CD4-positive, alpha-beta memory T cell (primary cell): ENCODE measurements at regions of chr22 and their contacts with region 1.

Region 1: GRCh38 chr22:31661851-31662656 is at the start of gene PISD:
- DNase-seq: peak; percentile 96 to 97 (median 97)
- H3K4me3 ChIP-seq: peak within 1 kb of the TSS; percentile 78 to 96
- H3K4me3 Mint-ChIP-seq: peak within 1 kb of the TSS; percentile 97 to 100 (median 100)
- H3K27ac ChIP-seq: peak within 1 kb of the TSS; percentile 73
- H3K27ac Mint-ChIP-seq: peak within 1 kb of the TSS; percentile 95 to 100 (median 98)
- H3K4me1 ChIP-seq: peaks cover 21% of the 10 kb centered on the region
- H3K4me1 Mint-ChIP-seq: peaks cover 26 to 46% (median 33%) of the 10 kb centered on the region in 4 donors
- H3K27me3 ChIP-seq: no peaks in the 10 kb centered on the region
- H3K27me3 Mint-ChIP-seq: peaks cover 0 to 2% of the 10 kb centered on the region in 2 donors
- total RNA-seq, gene PISD: 34.3 to 35.4 TPM

Region 2: DNA sequence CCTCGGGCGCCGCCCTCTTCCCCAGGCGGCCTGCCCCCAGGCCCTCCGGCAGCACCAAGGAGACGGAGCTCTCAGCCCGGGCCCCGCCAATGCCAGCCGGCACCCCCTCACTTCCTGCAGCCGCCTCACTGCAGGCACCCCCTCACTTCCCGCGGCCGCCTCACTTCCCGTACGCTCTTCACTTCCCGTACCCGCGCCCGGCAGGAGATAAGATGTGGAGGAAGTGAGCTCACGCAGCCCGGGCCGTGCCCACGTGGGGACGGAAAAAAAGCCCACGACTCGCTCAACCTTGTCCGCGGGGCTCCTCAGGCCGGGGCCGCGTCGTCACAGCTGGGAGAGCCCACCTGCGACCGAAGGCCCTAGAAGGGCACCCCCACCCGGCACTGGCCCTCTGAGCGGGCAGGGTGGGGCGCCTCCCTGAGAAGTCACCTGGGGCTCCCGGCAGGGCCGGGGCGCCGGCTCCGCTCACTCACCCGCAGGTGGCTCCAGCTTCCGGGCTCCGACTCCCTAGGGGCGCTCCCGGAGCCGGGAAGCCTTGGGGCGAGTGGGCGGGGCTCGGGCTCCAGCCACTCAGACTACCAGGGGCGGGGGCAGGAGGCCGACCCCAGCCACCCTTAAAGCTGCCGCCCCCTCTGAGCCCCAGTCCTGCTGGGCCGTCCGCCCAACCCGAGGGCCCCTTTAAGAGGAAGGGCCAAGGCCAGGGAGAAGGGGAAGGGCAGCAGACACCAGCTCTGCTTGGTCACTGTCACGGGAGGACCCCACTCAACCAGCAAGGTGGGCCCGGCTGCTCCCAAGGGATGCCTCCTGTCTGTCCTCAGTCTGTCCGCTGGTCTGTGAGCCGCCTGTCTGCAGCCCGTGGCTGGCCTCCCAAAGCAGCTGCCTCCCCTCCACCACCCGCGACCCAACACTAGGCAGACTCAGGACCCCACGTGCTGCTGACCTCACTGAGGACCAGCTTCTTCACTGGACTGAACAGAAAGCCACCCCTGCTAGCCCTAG is 31.4 kb before region 1 on chr22:
- CTCF ChIA-PET with region 1: interaction called, 5 read pairs
- POLR2A ChIA-PET with region 1: interaction called, 23 read pairs
- intact Hi-C with region 1: no loop called
- DNase-seq: peak; percentile 88 to 94 (median 89)
- H3K4me3 ChIP-seq: peak overlapping the region; percentile 29 to 69
- H3K4me3 Mint-ChIP-seq: peak overlapping the region; percentile 86 to 89 (median 88)
- H3K27ac ChIP-seq: peak overlapping the region; percentile 86
- H3K27ac Mint-ChIP-seq: peak overlapping the region; percentile 88 to 96 (median 94)
- H3K4me1 ChIP-seq: peaks cover 56% of the 10 kb centered on the region
- H3K4me1 Mint-ChIP-seq: peaks cover 20 to 66% (median 39%) of the 10 kb centered on the region in 4 donors
- H3K27me3 ChIP-seq: no peaks in the 10 kb centered on the region
- H3K27me3 Mint-ChIP-seq: no peaks in the 10 kb centered on the region

Region 3: DNA sequence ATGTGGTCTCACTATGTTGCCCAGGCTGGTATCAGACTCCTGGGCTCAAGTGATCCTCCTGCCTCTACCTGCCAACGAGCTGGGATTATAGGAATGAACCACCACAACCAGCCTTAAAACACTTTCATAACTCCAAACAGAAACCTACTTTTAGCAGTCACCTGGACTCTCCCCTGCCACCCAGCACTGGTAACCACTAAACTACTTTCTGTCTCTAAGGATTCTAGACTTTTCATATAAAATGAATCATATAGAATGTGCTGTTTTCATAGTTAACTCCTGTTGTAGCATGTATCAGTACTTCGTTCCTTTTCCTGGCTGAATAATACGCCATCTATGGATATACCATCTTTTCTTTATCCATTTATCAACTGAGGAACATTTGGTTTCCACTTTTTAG is 29.4 kb after region 1 on chr22:
- CTCF ChIA-PET with region 1: interaction called, 12 read pairs
- POLR2A ChIA-PET with region 1: interaction called, 3 read pairs
- intact Hi-C with region 1: no loop called
- DNase-seq: no peak
- H3K4me3 ChIP-seq: no peak overlapping the region
- H3K4me3 Mint-ChIP-seq: no peak overlapping the region
- H3K27ac ChIP-seq: no peak overlapping the region
- H3K27ac Mint-ChIP-seq: peak overlapping the region in 1 of 7 donors; percentile 29
- H3K4me1 ChIP-seq: peaks cover 12% of the 10 kb centered on the region
- H3K4me1 Mint-ChIP-seq: peaks cover 8 to 14% (median 11%) of the 10 kb centered on the region in 4 donors
- H3K27me3 ChIP-seq: no peaks in the 10 kb centered on the region
- H3K27me3 Mint-ChIP-seq: no peaks in the 10 kb centered on the region

Region 4: DNA sequence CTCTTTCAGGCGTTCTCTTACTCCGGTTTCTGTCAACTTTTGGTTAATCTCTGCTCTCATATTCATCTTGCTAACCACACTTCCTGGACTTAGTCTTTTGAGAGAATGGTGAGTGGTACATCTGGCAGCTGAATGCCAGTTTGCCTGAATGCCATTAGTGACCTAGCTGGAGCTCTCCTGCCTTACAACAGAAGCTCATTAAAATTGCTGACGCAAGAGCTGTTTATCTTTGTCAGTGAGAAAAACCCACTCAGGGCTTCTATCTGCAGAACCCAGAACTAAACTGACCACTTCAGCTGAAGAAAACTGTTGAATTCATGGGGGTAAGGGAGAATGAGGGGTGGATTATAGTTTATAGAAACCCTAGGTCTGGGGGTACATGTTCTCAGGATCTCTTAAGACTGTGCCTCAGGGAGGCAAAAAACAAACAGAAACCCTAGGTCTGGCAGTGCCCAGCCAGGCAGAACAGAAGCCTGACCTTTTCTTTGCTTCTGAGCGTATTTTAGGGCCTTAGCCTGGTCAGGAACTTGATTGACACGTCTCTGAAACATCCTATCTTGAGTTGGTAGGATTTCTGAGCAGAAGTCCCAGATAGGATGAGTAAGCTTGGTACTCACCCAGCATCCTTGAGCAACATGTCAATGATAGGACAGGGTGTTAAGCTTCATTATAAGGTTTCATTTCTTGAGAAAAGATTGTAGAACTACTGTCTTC is 229.5 kb after region 1 on chr22:
- CTCF ChIA-PET with region 1: no interaction called
- POLR2A ChIA-PET with region 1: no interaction called
- intact Hi-C with region 1: no loop called
- DNase-seq: no peak
- H3K4me3 ChIP-seq: no peak overlapping the region
- H3K4me3 Mint-ChIP-seq: no peak overlapping the region
- H3K27ac ChIP-seq: no peak overlapping the region
- H3K27ac Mint-ChIP-seq: peak overlapping the region in 1 of 7 donors; percentile 4
- H3K4me1 ChIP-seq: no peaks in the 10 kb centered on the region
- H3K4me1 Mint-ChIP-seq: peaks cover 0 to 1% (median 0%) of the 10 kb centered on the region in 4 donors
- H3K27me3 ChIP-seq: no peaks in the 10 kb centered on the region
- H3K27me3 Mint-ChIP-seq: no peaks in the 10 kb centered on the region

Region 5: GRCh38 chr22:31943976-31944699 is 282.1 kb after region 1 on chr22 and contains the start of gene YWHAH:
- CTCF ChIA-PET with region 1: interaction called, 65 read pairs
- POLR2A ChIA-PET with region 1: interaction called, 23 read pairs
- intact Hi-C with region 1: loop called (anchors 1 kb)
- DNase-seq: peak; percentile 86 to 89 (median 86)
- H3K4me3 ChIP-seq: peak within 1 kb of the TSS; percentile 55 to 67
- H3K4me3 Mint-ChIP-seq: peak within 1 kb of the TSS; percentile 91 to 97 (median 94)
- H3K27ac ChIP-seq: peak within 1 kb of the TSS; percentile 77
- H3K27ac Mint-ChIP-seq: peak within 1 kb of the TSS in 6 of 7 donors; percentile 94 to 98 (median 96)
- H3K4me1 ChIP-seq: peaks cover 33% of the 10 kb centered on the region
- H3K4me1 Mint-ChIP-seq: peaks cover 10 to 25% (median 17%) of the 10 kb centered on the region in 4 donors
- H3K27me3 ChIP-seq: no peaks in the 10 kb centered on the region
- H3K27me3 Mint-ChIP-seq: no peaks in the 10 kb centered on the region
- total RNA-seq, gene YWHAH: 48.0 to 57.0 TPM

Region 6: GRCh38 chr22:31958625-31959239 is 296.7 kb after region 1 on chr22:
- CTCF ChIA-PET with region 1: interaction called, 18 read pairs
- POLR2A ChIA-PET with region 1: interaction called, 14 read pairs
- intact Hi-C with region 1: no loop called
- DNase-seq: peak; percentile 40 to 72 (median 69)
- H3K4me3 ChIP-seq: no peak overlapping the region
- H3K4me3 Mint-ChIP-seq: peak overlapping the region; percentile 73 to 90 (median 79)
- H3K27ac ChIP-seq: peak overlapping the region; percentile 61
- H3K27ac Mint-ChIP-seq: peak overlapping the region; percentile 95 to 99 (median 97)
- H3K4me1 ChIP-seq: peaks cover 64% of the 10 kb centered on the region
- H3K4me1 Mint-ChIP-seq: peaks cover 44 to 71% (median 55%) of the 10 kb centered on the region in 4 donors
- H3K27me3 ChIP-seq: no peaks in the 10 kb centered on the region
- H3K27me3 Mint-ChIP-seq: no peaks in the 10 kb centered on the region

Region 7: GRCh38 chr22:32474635-32475467 is 812.8 kb after region 1 on chr22 and contains the start of gene FBXO7:
- CTCF ChIA-PET with region 1: no interaction called
- POLR2A ChIA-PET with region 1: interaction called, 6 read pairs
- intact Hi-C with region 1: loop called (anchors 5 kb)
- DNase-seq: peak; percentile 84 to 88 (median 86)
- H3K4me3 ChIP-seq: peak within 1 kb of the TSS; percentile 72 to 91
- H3K4me3 Mint-ChIP-seq: peak within 1 kb of the TSS; percentile 95 to 98 (median 97)
- H3K27ac ChIP-seq: peak within 1 kb of the TSS; percentile 95
- H3K27ac Mint-ChIP-seq: peak within 1 kb of the TSS; percentile 92 to 98 (median 96)
- H3K4me1 ChIP-seq: peaks cover 41% of the 10 kb centered on the region
- H3K4me1 Mint-ChIP-seq: peaks cover 20 to 45% (median 31%) of the 10 kb centered on the region in 4 donors
- H3K27me3 ChIP-seq: no peaks in the 10 kb centered on the region
- H3K27me3 Mint-ChIP-seq: no peaks in the 10 kb centered on the region
- total RNA-seq, gene FBXO7: 89.3 to 95.3 TPM